ENCODE measurements at regions of chrX and their contacts with region 1.

Region 1: GRCh38 chrX:153763989-153764755 is at the start of gene PLXNB3:
- DNase-seq: peak; percentile 64 to 81 (median 74)
- H3K4me3 ChIP-seq: peak within 1 kb of the TSS; percentile 27
- H3K27ac ChIP-seq: no peak within 1 kb of the TSS
- H3K4me1 ChIP-seq: no peaks in the 10 kb centered on the region
- H3K27me3 ChIP-seq: no peaks in the 10 kb centered on the region
- CTCF ChIP-seq: peak; percentile 58 to 71 (median 66)
- EP300 ChIP-seq: no peak
- POLR2A ChIP-seq: peak; percentile 10
- total RNA-seq, gene PLXNB3: 0.46 to 5.0 (median 0.95) TPM

Region 2: DNA sequence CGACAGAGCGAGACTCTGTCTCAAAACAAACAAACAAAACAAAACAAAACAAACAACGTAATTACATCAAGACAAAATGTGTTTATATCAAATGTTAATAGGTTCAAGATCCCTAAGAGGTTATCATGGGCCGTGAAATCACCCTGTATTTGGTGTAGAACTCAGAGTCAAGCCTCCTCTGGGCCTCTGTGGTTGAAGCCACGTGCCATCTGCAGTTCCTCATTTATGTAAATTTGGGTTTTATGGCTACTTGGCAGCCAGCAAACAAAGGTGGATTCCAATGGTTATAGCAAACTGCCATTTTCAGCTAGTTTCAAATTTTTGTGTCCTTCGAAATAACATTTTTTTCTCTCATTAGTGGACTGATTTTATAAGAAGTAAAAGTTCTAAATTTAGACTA is 916.9 kb before region 1 on chrX:
- intact Hi-C with region 1: no loop called
- DNase-seq: no peak
- H3K4me3 ChIP-seq: no peak overlapping the region
- H3K27ac ChIP-seq: no peak overlapping the region
- H3K4me1 ChIP-seq: no peaks in the 10 kb centered on the region
- H3K27me3 ChIP-seq: no peaks in the 10 kb centered on the region
- CTCF ChIP-seq: no peak
- EP300 ChIP-seq: no peak
- POLR2A ChIP-seq: no peak

Region 3: GRCh38 chrX:153953342-153953830 is 189.2 kb after region 1 on chrX:
- intact Hi-C with region 1: loop called (anchors 2 to 5 kb)
- DNase-seq: peak; percentile 60 to 87 (median 80)
- H3K4me3 ChIP-seq: no peak overlapping the region
- H3K27ac ChIP-seq: no peak overlapping the region
- H3K4me1 ChIP-seq: peaks cover 2% of the 10 kb centered on the region
- H3K27me3 ChIP-seq: no peaks in the 10 kb centered on the region
- CTCF ChIP-seq: peak; percentile 92 to 95 (median 94)
- EP300 ChIP-seq: no peak
- POLR2A ChIP-seq: no peak

Region 4: DNA sequence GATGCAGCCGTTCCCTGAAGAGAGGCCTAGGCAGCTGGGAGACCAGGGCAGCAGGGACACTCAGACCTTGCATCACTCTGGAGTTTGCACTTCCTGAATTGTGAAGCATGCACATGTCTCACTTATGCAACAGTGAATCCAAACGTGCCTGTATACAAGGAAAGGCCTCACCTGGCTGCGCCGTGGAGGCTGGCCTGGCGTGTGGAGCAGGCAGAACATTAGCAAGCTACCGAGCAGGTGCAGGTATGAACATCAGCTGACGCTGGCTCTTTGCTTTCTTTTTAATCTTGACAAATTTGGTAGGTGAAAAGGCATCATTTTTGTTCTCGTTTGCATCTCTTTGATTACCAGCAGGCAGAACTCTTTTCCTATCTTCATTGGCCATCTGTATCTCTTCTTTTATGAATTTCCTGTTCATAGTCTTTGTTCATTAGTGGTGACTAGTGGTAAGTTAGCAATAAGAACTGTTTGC is 292.6 kb after region 1 on chrX:
- intact Hi-C with region 1: loop called in 1 of 4 experiments (anchors 5 kb)
- DNase-seq: no peak
- H3K4me3 ChIP-seq: no peak overlapping the region
- H3K27ac ChIP-seq: no peak overlapping the region
- H3K4me1 ChIP-seq: peaks cover 8% of the 10 kb centered on the region
- H3K27me3 ChIP-seq: no peaks in the 10 kb centered on the region
- CTCF ChIP-seq: no peak
- EP300 ChIP-seq: no peak
- POLR2A ChIP-seq: no peak